SK-N-SH (cell line): ENCODE measurements at regions of chr14 and their contacts with region 1.

Region 1: DNA sequence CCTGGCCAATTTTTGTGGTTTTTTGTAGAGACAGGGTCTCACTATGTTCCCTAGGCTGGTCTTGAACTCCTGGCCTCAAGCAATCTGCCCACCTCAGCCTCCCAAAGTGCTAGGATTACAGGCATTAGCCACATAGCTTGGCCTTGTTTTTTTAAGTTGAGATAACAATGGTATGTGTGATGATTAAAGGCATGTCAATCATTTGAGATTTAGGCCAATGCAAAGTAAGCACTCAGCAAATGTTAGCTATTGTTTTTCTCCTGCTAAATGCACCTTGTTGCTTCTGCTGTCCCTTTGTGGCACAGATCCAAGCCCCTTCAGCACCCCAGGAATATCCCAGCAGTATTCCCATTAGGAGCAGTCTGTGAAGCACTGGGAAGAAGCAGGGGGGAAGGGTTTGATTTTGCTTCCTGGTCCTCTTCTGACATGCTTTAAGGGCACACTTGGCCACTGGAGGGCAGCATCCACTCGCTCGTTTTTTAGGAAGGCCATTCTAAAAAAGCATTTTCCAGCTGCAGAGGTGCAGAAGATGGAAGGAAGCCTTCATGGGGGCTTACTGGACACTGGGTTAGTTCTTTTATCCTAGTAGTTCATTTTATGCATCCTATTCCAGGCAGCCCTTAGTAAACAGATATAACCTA is 70.2 kb upstream of the ZFP36L1 start:
- DNase-seq: peak; percentile 79
- H3K4me3 ChIP-seq: no peak overlapping the region; a peak in 1 of 4 replicates
- H3K27ac ChIP-seq: no peak overlapping the region
- H3K4me1 ChIP-seq: no peaks in the 10 kb centered on the region
- H3K27me3 ChIP-seq: no peaks in the 10 kb centered on the region
- CTCF ChIP-seq: peak; percentile 84
- EP300 ChIP-seq: no peak
- RAD21 ChIP-seq: peak; percentile 88

Region 2: GRCh38 chr14:68607081-68607886 is 255.8 kb before region 1 on chr14:
- CTCF ChIA-PET with region 1: no interaction called
- POLR2A ChIA-PET with region 1: no interaction called
- DNase-seq: no peak
- H3K4me3 ChIP-seq: no peak overlapping the region
- H3K27ac ChIP-seq: no peak overlapping the region
- H3K4me1 ChIP-seq: no peaks in the 10 kb centered on the region; a peak in 1 of 4 replicates
- H3K27me3 ChIP-seq: no peaks in the 10 kb centered on the region
- CTCF ChIP-seq: no peak
- EP300 ChIP-seq: no peak
- RAD21 ChIP-seq: no peak

Region 3: GRCh38 chr14:68788996-68789820 is 73.9 kb before region 1 on chr14:
- CTCF ChIA-PET with region 1: no interaction called
- POLR2A ChIA-PET with region 1: no interaction called
- DNase-seq: peak; percentile 95
- H3K4me3 ChIP-seq: peak overlapping the region in 1 of 2 experiments; percentile 52; a peak in 2 of 4 replicates
- H3K27ac ChIP-seq: peak overlapping the region; percentile 58 to 64
- H3K4me1 ChIP-seq: peaks cover 4 to 17% of the 10 kb centered on the region in 2 experiments
- H3K27me3 ChIP-seq: no peaks in the 10 kb centered on the region
- CTCF ChIP-seq: peak; percentile 79
- EP300 ChIP-seq: no peak
- RAD21 ChIP-seq: peak; percentile 95

Region 4: GRCh38 chr14:68843471-68844209 is 19.4 kb before region 1 on chr14:
- CTCF ChIA-PET with region 1: interaction called, 16 read pairs
- POLR2A ChIA-PET with region 1: no interaction called
- DNase-seq: peak; percentile 77
- H3K4me3 ChIP-seq: peak overlapping the region in 1 of 2 experiments; percentile 23; a peak in 2 of 4 replicates
- H3K27ac ChIP-seq: no peak overlapping the region
- H3K4me1 ChIP-seq: peaks cover 0 to 4% of the 10 kb centered on the region in 2 experiments; a peak in 2 of 4 replicates
- H3K27me3 ChIP-seq: no peaks in the 10 kb centered on the region
- CTCF ChIP-seq: peak; percentile 94
- EP300 ChIP-seq: no peak
- RAD21 ChIP-seq: peak; percentile 71

Region 5: GRCh38 chr14:68874746-68875155 is 11.7 kb after region 1 on chr14:
- CTCF ChIA-PET with region 1: interaction called, 56 read pairs
- POLR2A ChIA-PET with region 1: no interaction called
- DNase-seq: no peak
- H3K4me3 ChIP-seq: no peak overlapping the region
- H3K27ac ChIP-seq: no peak overlapping the region
- H3K4me1 ChIP-seq: no peaks in the 10 kb centered on the region
- H3K27me3 ChIP-seq: no peaks in the 10 kb centered on the region
- CTCF ChIP-seq: no peak
- EP300 ChIP-seq: no peak
- RAD21 ChIP-seq: no peak

Region 6: DNA sequence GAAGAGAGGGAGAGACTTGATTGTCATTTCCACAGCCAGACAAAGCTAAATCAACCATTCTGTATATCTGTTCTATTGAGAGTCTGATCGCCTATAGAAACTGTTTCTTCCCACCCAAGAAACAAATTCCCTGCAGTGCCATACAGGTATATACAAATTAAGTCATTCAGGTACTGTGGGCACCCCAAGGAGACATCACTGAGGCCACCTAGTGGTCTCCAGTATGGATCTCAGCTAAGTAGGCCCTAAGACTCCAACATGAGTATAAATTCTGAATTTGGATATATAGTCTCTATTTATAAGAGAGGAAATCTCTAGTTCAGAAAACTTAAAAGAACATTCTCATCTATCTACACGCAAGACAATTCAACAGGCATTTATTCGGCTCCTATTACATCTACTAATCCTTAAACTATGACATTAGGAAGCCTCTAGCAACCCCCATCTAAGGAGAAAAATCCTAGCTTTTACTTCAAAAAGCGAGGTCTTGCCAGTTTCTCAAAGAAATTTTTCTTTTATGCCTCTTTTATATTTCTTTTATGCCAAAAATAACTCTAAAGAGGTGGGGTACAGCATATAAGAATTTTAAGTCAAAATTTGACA is 227.2 kb after region 1 on chr14:
- CTCF ChIA-PET with region 1: interaction called, 38 read pairs
- POLR2A ChIA-PET with region 1: no interaction called
- DNase-seq: peak; percentile 32
- H3K4me3 ChIP-seq: no peak overlapping the region
- H3K27ac ChIP-seq: peak overlapping the region in 1 of 2 experiments; percentile 90; a peak in 2 of 4 replicates
- H3K4me1 ChIP-seq: peaks cover 22 to 29% of the 10 kb centered on the region in 2 experiments
- H3K27me3 ChIP-seq: no peaks in the 10 kb centered on the region
- CTCF ChIP-seq: peak; percentile 87
- EP300 ChIP-seq: no peak
- RAD21 ChIP-seq: peak; percentile 77

Region 7: GRCh38 chr14:69107407-69108003 is 244.4 kb after region 1 on chr14:
- CTCF ChIA-PET with region 1: interaction called, 94 read pairs
- POLR2A ChIA-PET with region 1: no interaction called
- DNase-seq: peak; percentile 61
- H3K4me3 ChIP-seq: no peak overlapping the region
- H3K27ac ChIP-seq: no peak overlapping the region
- H3K4me1 ChIP-seq: no peaks in the 10 kb centered on the region; a peak in 1 of 4 replicates
- H3K27me3 ChIP-seq: no peaks in the 10 kb centered on the region
- CTCF ChIP-seq: peak; percentile 81
- EP300 ChIP-seq: no peak
- RAD21 ChIP-seq: peak; percentile 92

Region 8: GRCh38 chr14:69129264-69129880 is 266.3 kb after region 1 on chr14:
- CTCF ChIA-PET with region 1: interaction called, 24 read pairs
- POLR2A ChIA-PET with region 1: no interaction called
- DNase-seq: peak; percentile 55
- H3K4me3 ChIP-seq: peak overlapping the region in 1 of 2 experiments; percentile 8; a peak in 1 of 4 replicates
- H3K27ac ChIP-seq: peak overlapping the region; percentile 46 to 64
- H3K4me1 ChIP-seq: peaks cover 24 to 28% of the 10 kb centered on the region in 2 experiments
- H3K27me3 ChIP-seq: no peaks in the 10 kb centered on the region
- CTCF ChIP-seq: peak; percentile 97
- EP300 ChIP-seq: no peak
- RAD21 ChIP-seq: peak; percentile 93